ENCODE measurements at regions of chr5 and their contacts with region 1.

Region 1: DNA sequence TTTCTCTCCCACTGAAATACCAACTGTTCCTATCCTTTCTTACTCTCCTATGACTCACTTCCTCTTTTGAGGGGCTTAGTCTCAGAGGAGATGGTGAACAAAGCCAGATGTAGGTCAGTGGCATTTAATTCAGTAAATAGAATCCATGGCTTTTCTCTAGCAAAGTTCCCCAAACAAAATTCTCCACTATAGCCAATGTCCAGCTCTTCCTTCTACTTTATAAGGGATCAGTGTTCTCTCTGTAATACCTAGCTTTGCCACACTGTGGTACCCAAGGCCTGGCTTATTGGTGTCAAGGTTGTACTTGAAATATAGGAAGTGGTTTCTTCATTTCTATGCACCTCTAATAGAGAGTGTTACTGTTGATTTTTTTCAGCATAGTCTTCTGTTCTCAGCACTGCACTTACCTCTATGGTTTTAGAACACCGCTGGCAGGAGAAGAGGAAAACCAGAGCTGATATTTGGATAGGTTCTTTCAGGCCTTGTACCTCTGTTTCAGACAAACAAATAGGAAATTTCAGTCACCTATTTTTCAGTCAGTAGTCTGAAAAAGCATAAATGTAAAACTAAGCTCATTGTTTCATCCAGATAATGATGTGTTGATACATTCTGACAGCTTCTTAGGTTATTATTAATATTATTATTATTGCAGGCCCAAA is 40.6 kb upstream of the ITGA2 start:
- DNase-seq: peak; percentile 91
- ATAC-seq: peak; percentile 97
- H3K4me3 ChIP-seq: no peak overlapping the region
- H3K27ac ChIP-seq: peak overlapping the region; percentile 52
- H3K4me1 ChIP-seq: peaks cover 10% of the 10 kb centered on the region; the same call in 1 of the 2 replicates
- H3K27me3 ChIP-seq: no peaks in the 10 kb centered on the region
- CTCF ChIP-seq: peak; percentile 78

Region 2: GRCh38 chr5:51386916-51387883 is 1561.3 kb before region 1 on chr5:
- CTCF ChIA-PET with region 1: no interaction called
- POLR2A ChIA-PET with region 1: no interaction called
- in situ Hi-C with region 1: no loop called
- intact Hi-C with region 1: no loop called
- DNase-seq: no peak
- ATAC-seq: 0 out of 2 replicates have a peak, but pooled peaks have one; percentile 23
- H3K4me3 ChIP-seq: peak overlapping the region; percentile 24 to 35
- H3K27ac ChIP-seq: no peak overlapping the region
- H3K4me1 ChIP-seq: peaks cover 13% of the 10 kb centered on the region
- H3K27me3 ChIP-seq: peaks cover 45% of the 10 kb centered on the region
- CTCF ChIP-seq: no peak

Region 3: DNA sequence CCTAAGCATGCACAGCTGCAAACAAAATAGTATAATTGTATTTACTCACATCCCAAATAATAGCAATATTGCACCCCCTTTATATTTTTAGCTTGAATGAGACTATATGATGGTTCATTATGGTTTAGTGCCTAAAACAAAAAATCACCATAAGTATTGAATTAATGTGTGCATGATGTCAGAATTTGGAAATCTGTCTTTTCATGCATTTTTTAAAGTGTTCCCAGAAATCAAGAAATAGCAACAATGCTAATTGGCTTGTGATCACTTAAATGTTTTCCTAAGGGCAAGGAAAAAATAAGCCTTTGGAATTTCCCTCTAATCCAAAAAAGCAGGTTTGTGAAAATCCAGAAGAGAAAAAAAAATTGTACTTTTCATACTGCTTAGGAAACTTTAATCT is 10.3 kb before region 1 on chr5:
- CTCF ChIA-PET with region 1: no interaction called
- POLR2A ChIA-PET with region 1: no interaction called
- in situ Hi-C with region 1: no loop called
- intact Hi-C with region 1: no loop called
- DNase-seq: no peak
- ATAC-seq: no peak
- H3K4me3 ChIP-seq: no peak overlapping the region
- H3K27ac ChIP-seq: no peak overlapping the region
- H3K4me1 ChIP-seq: no peaks in the 10 kb centered on the region
- H3K27me3 ChIP-seq: no peaks in the 10 kb centered on the region
- CTCF ChIP-seq: no peak

Region 4: DNA sequence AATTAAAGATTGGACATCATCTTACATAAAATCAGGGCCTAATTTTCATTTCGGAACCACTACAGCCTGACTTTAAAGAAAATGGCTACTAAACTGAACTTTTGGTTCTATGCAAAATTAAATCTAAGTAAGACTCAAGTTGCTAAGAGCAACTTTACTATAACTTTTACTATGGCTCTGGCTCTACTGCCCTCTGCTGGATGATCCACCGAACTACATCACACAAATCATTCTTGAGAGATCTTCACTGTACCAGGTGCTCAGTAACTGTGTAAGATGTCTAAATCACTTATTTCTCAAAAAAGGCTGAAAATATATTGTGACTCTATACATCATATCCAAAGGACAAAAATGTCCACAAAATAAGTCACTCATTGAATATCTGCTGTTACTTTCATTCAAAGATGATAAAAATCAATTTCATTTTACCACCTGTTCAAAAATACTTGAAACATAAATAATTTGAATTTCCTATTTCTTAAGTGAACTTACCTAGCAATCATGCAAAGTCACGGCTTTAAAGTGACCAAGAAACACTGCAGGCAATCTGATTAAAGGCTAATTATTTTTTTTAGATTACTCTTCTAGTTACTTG is 147.5 kb after region 1 on chr5:
- CTCF ChIA-PET with region 1: interaction called, 4 read pairs
- POLR2A ChIA-PET with region 1: no interaction called
- in situ Hi-C with region 1: no loop called
- intact Hi-C with region 1: loop called (anchors 1 kb)
- DNase-seq: peak; percentile 73
- ATAC-seq: peak; percentile 37; the same call in 1 of the 2 replicates
- H3K4me3 ChIP-seq: no peak overlapping the region
- H3K27ac ChIP-seq: no peak overlapping the region
- H3K4me1 ChIP-seq: peaks cover 11% of the 10 kb centered on the region
- H3K27me3 ChIP-seq: no peaks in the 10 kb centered on the region
- CTCF ChIP-seq: peak; percentile 83; the same call in 1 of the 2 replicates

Measured in Panc1 (cell line).